BJ (cell line): ENCODE measurements at regions of chr16 and their contacts with region 1.

Region 1: GRCh38 chr16:89615596-89616090 is 2.2 kb downstream of the DPEP1 start:
- DNase-seq: no peak
- H3K4me3 ChIP-seq: no peak overlapping the region
- H3K27me3 ChIP-seq: peaks cover 3% of the 10 kb centered on the region
- CTCF ChIP-seq: peak; percentile 82

Region 2: DNA sequence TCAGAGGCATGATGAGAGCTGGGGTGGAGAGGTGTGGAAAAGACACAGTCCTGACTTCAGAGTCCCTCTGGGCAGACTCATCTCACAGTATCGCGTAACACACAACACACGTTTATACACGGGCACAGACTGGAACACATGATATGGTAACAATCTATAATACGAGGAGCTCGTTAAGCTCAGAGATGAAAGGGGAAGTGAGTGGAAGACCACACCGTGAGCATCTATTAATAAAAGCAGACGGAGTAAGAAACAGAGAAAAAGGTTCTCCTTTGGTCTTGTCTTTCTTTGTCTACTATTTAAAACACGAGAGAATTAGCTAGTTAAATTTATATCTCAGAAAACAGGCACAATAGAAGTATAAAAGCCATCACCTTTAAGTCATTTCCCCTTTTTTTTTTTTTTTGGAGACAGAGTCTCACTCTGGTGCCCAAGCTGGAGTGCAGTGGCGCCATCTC is 138.8 kb before region 1 on chr16:
- CTCF ChIA-PET with region 1: no interaction called
- POLR2A ChIA-PET with region 1: no interaction called
- DNase-seq: no peak
- H3K4me3 ChIP-seq: no peak overlapping the region
- H3K27me3 ChIP-seq: no peaks in the 10 kb centered on the region
- CTCF ChIP-seq: no peak

Region 3: GRCh38 chr16:89602273-89602951 is 13.2 kb before region 1 on chr16:
- CTCF ChIA-PET with region 1: interaction called, 33 read pairs
- POLR2A ChIA-PET with region 1: no interaction called
- DNase-seq: peak; percentile 31
- H3K4me3 ChIP-seq: no peak overlapping the region
- H3K27me3 ChIP-seq: no peaks in the 10 kb centered on the region
- CTCF ChIP-seq: no peak

Region 4: GRCh38 chr16:89633064-89633631 is 17.5 kb after region 1 on chr16:
- CTCF ChIA-PET with region 1: interaction called, 36 read pairs
- POLR2A ChIA-PET with region 1: interaction called, 3 read pairs
- DNase-seq: peak; percentile 33
- H3K4me3 ChIP-seq: no peak overlapping the region
- H3K27me3 ChIP-seq: no peaks in the 10 kb centered on the region; the same call in 1 of the 2 replicates
- CTCF ChIP-seq: no peak

Region 5: DNA sequence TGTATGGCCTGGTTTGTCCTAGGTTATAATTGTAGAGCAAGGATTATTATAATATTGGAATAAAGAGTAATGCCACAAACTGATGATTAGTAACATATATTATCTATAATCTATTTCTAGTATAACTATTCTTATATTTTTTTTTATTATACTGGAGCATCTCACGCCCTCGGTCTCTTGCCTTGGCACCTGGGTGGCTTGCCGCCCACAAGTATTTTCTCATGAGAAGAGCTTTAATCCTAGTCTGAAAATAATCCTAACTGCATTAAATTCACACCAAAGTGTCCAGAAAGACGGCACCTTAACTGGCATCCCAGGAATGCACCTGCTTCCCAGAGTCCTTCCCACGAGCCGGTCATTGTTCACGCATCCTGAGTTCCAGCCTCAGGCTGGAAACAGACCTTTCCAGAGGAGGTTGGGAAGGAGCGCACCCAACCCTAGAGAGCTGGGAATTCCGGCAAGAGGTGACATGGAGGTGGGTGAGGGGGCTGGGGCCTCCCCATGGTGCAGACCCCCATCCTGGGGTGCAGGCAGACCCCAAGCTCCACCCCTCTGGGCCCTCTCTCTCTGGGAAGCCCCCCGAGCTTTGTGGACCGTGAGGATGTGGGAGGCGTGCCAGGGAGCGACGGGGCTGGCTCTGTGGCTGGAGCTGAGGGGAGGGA is 25.9 kb after region 1 on chr16:
- CTCF ChIA-PET with region 1: interaction called, 35 read pairs
- POLR2A ChIA-PET with region 1: no interaction called
- DNase-seq: no peak
- H3K4me3 ChIP-seq: no peak overlapping the region
- H3K27me3 ChIP-seq: no peaks in the 10 kb centered on the region
- CTCF ChIP-seq: no peak